HepG2 (cell line): ENCODE measurements at regions of chr1 and their contacts with region 1.

Region 1: DNA sequence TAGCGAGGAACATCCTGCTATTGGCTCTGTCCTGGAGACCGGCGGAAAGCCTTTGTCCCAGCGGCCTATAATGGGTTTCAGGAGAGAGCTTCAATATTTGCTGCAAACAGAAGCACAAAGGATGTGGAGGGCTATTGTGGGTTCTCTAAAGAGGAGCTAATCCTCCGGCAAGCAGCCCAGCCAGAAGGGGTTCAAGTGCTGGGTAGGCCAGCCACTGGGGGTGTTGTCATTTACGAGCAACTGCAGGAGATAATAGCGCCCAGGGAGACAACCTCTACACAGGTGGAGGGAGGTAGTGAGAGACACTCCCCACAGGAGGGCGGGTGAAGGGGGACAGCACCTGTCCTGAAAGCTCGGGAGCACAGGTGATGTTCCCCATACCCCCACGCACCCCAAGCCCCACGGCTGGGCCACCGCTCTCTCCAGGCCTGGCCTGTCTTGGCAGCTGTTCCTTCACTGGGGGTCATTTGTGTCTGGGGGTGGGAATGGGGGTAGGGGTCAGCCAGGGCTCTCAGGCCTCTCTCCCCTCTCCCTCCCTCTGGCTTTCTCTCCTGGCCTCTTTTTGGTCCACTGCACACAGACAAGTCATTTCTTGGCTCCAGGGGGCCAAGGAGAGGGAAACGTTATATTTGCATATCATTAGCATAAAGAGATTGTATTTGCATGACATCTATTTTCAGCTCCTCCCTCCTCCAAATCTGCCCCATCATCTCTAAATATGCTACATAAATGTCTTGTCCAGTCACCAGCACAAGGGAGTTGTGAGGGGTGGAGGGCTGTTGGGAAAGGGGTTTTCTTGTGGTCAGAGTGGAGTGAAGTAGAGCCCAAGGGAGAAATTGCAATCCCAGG is 22.0 kb upstream of the SLC26A9 start:
- DNase-seq: no peak
- ATAC-seq: no peak
- H3K4me3 ChIP-seq: no peak overlapping the region
- H3K27ac ChIP-seq: no peak overlapping the region
- H3K4me1 ChIP-seq: no peaks in the 10 kb centered on the region
- H3K27me3 ChIP-seq: peaks cover 3 to 57% of the 10 kb centered on the region in 2 experiments; a peak in 3 of 5 replicates
- CTCF ChIP-seq: no peak
- EP300 ChIP-seq: no peak
- POLR2A ChIP-seq: no peak
- RAD21 ChIP-seq: no peak

Region 2: DNA sequence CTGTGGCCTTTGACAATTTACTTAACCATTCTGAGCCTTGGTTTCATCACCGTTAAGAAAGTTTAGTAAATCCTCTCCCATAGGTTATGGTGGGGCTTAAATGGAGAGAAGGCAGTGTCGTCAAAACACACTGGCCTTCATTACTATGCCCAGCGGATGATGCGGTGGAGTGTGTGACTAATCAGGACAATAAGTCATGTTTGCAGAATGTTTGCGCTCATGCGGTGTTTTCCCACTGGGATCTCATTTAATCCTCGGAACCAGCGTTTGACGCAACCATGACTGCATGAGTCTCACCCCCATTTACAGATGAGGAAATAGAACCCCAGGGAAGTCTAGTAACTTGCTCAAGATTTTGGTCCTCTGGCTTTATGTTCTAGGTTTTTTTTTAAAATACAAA is 39.5 kb before region 1 on chr1:
- CTCF ChIA-PET with region 1: no interaction called
- POLR2A ChIA-PET with region 1: no interaction called
- in situ Hi-C with region 1: loop called (anchors 5 kb)
- intact Hi-C with region 1: no loop called
- DNase-seq: no peak
- ATAC-seq: no peak
- H3K4me3 ChIP-seq: no peak overlapping the region
- H3K27ac ChIP-seq: no peak overlapping the region
- H3K4me1 ChIP-seq: no peaks in the 10 kb centered on the region
- H3K27me3 ChIP-seq: peaks cover 6 to 27% of the 10 kb centered on the region in 2 experiments; a peak in 3 of 5 replicates
- CTCF ChIP-seq: no peak
- EP300 ChIP-seq: no peak
- POLR2A ChIP-seq: no peak
- RAD21 ChIP-seq: no peak